MCF 10A (cell line): ENCODE measurements at regions of chr1 and their contacts with region 1.

Region 1: DNA sequence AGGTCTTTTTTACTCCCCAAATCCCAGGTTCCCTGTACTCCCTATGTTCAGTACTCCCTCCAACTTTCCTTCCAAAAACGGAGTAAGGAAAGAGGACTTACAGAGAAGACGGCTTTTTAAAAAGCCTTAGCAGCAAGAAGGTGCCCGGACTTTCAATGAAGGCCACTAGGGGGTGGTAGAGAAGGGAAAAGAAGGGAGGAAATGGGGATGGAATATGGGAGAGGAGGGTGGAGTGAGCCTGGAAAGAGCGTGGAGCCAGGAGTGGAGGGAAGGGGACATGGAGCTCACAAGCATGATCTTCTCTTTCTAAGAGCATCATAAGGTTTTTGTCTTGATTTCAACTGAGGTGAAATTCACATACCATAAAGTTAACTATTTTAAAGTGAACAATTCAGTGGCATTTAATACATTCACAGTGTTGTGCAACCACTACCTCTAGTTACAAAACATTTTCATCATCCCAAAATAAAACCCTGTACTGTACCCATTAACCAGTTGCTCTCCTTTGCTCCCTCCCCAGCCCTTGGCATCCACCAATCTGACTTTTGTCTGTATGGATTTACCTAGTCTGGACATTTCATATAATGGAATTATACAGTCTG is 129.9 kb downstream of the ZNF281 start:
- DNase-seq: peak; percentile 89
- H3K4me3 Mint-ChIP-seq: no peak overlapping the region
- H3K27ac Mint-ChIP-seq: no peak overlapping the region
- H3K4me1 Mint-ChIP-seq: peaks cover 7% of the 10 kb centered on the region
- H3K27me3 Mint-ChIP-seq: no peaks in the 10 kb centered on the region
- CTCF ChIP-seq: peak; percentile 88

Region 2: DNA sequence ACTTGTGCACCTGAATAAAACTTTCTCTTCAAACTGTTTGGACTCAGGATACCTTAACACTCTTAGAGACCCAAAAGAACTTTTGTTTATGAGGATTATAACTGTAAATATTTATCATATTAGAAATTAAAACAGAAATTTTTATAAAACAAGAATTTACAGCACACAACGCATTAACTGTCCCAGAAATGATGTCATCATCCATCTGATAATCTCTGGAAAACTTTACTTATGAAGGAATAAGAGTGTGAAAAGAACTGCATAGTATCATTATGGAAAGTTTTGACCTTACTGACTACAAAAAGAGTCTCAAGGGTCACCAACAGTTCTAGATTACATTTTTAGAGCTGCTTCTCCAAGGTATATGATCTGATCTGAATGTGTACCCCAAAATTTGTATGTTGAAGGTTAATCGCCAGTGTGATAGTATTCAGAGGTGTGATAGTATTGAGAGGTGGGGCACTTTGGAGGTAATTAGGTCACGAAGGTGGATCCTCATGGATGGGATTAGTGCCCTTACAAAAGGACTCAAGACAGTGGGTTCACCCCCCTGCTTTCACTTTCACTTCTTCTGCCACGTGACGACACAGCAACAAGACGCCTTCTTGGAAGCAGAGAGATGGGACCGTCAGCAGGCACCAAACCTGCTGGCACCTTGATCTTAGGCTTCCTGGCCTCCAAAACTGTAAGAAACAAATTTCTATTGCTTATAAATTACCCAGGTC is 348.1 kb before region 1 on chr1:
- CTCF ChIA-PET with region 1: no interaction called
- POLR2A ChIA-PET with region 1: no interaction called
- intact Hi-C with region 1: no loop called
- DNase-seq: no peak
- H3K4me3 Mint-ChIP-seq: no peak overlapping the region
- H3K27ac Mint-ChIP-seq: no peak overlapping the region
- H3K4me1 Mint-ChIP-seq: no peaks in the 10 kb centered on the region
- H3K27me3 Mint-ChIP-seq: no peaks in the 10 kb centered on the region
- CTCF ChIP-seq: no peak

Region 3: DNA sequence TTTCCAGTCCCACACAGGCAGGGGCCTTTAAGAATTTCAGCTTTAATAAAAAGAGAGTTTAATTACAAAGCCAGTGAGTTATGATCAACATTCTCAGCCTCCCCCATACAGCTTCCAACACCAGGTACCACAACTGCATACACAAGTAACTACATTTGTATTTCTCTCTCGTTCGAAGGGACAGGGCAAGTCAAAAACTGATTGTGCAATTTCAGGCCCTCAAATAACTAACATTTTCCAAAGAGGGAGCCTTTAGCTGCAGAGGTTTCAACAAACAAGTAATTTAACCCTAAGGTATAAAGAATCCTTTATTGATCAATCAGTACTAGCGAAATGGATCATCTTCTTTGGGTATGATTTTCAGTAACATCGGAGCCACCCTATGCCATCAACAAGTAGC is 12.5 kb before region 1 on chr1:
- CTCF ChIA-PET with region 1: interaction called, 11 read pairs
- POLR2A ChIA-PET with region 1: interaction called, 3 read pairs
- intact Hi-C with region 1: no loop called
- DNase-seq: no peak
- H3K4me3 Mint-ChIP-seq: no peak overlapping the region
- H3K27ac Mint-ChIP-seq: no peak overlapping the region
- H3K4me1 Mint-ChIP-seq: no peaks in the 10 kb centered on the region
- H3K27me3 Mint-ChIP-seq: no peaks in the 10 kb centered on the region
- CTCF ChIP-seq: no peak

Region 4: GRCh38 chr1:200290010-200290685 is 10.2 kb after region 1 on chr1:
- CTCF ChIA-PET with region 1: interaction called, 26 read pairs
- POLR2A ChIA-PET with region 1: interaction called, 3 read pairs
- intact Hi-C with region 1: no loop called
- DNase-seq: no peak
- H3K4me3 Mint-ChIP-seq: no peak overlapping the region
- H3K27ac Mint-ChIP-seq: no peak overlapping the region
- H3K4me1 Mint-ChIP-seq: no peaks in the 10 kb centered on the region
- H3K27me3 Mint-ChIP-seq: no peaks in the 10 kb centered on the region
- CTCF ChIP-seq: no peak

Region 5: DNA sequence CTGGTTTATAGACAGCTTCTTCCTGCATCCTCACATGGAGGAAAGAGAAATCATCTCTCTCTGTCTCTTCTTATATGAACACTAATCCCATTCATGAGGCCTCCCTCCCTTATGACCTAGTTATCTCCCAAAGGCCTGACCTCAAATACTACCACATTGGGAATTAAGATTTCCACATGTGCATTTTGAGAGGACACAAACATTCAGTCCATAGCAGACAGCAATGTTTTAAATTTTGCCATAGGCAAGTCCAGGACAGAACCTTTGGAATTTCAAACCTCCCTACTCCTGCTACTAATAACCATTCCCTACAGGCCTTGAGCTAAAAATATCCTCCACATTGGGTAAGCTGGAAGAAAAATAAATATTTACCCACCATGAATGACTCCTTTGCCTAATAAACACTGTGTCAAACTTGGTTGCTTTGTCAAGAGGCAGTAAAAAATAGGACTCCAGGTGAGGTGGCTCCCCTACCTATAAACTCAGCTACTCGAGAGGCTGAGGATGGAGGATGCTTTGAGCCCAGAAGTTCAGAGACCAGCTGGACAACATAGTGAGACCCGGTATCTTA is 16.3 kb after region 1 on chr1:
- CTCF ChIA-PET with region 1: interaction called, 26 read pairs
- POLR2A ChIA-PET with region 1: interaction called, 3 read pairs
- intact Hi-C with region 1: no loop called
- DNase-seq: no peak
- H3K4me3 Mint-ChIP-seq: no peak overlapping the region
- H3K27ac Mint-ChIP-seq: no peak overlapping the region
- H3K4me1 Mint-ChIP-seq: no peaks in the 10 kb centered on the region
- H3K27me3 Mint-ChIP-seq: no peaks in the 10 kb centered on the region
- CTCF ChIP-seq: no peak

Region 6: GRCh38 chr1:200555998-200556397 is 276.1 kb after region 1 on chr1:
- CTCF ChIA-PET with region 1: no interaction called
- POLR2A ChIA-PET with region 1: no interaction called
- intact Hi-C with region 1: no loop called
- DNase-seq: no peak
- H3K4me3 Mint-ChIP-seq: no peak overlapping the region
- H3K27ac Mint-ChIP-seq: no peak overlapping the region
- H3K4me1 Mint-ChIP-seq: peaks cover 2% of the 10 kb centered on the region
- H3K27me3 Mint-ChIP-seq: no peaks in the 10 kb centered on the region
- CTCF ChIP-seq: no peak